Activated T-helper 2 cell treated with anti-CD3 and anti-CD28 coated beads, Interferon-gamma antibody, Interleukin-2, Interleukin-4, amounts not matched to agents 10 μg/mL and 5 μg/mL and 100 μg/mL, durations not matched to agents 14 hours and 24 hours and 36 hours (primary cell): ENCODE measurements at regions of chr6 and their contacts with region 1.

Region 1: DNA sequence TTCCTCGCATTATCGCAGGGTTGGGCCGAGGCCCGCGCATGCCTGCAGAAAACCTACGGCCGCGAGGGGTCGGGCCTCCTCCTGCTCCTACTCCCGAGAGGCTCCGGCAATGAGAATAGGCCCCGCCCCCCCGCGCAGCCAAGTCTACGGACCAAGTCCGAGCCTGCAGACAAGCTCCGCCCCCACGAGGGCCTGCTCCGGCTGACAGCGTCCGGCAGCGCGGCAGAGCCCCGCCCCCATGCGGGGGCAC is 3.1 kb upstream of the GPSM3 start:
- DNase-seq: peak; percentile 100
- H3K4me3 Mint-ChIP-seq: peak overlapping the region; percentile 98
- H3K27ac Mint-ChIP-seq: peak overlapping the region; percentile 99
- H3K4me1 Mint-ChIP-seq: peaks cover 33% of the 10 kb centered on the region
- H3K27me3 Mint-ChIP-seq: no peaks in the 10 kb centered on the region

Region 2: DNA sequence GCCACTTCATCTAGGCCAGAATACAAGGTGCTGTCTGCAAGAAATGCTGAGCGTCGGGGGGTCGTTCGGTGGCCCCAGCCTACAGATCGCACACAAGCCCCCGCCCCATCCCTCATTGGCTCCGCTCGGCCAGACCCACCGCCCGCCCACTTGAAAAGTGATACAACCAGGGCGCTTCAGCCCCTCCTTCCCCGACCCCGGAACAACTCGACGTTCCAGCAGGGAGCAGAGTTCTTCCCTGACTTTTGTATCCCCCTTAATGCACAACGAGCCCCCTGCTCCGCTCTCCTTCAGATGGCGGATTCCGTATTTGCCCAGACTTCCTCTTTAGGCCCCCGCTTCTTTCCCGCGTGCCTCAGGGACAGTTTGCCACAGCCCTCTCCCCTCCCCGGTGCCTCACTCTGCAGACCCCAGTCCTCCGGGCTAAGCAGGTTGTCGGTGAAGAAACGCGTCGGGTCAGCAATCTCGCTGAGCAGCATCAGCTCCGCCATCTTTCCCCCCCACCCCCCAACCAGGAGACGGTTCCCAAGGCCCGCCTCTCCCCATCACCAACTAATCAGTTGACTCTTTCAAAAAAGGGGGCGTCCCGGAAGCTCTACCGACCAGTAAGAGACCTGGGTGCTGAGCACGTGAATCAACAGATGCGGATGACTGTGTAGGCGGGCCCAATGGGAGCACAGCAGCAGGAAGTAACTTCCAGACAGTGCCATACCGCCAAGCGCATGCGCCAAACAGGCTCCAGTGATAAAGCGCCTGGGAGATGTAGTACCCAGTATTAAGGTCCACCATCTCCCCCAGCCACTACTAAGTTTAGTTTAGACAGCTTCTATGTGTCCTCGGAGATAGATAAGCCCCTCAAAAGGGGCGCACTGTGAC is 67.6 kb before region 1 on chr6 and contains the start of gene ATF6B:
- intact Hi-C with region 1: loop called (anchors 1 kb)
- DNase-seq: peak; percentile 98
- H3K4me3 Mint-ChIP-seq: peak within 1 kb of the TSS; percentile 99
- H3K27ac Mint-ChIP-seq: peak within 1 kb of the TSS; percentile 97
- H3K4me1 Mint-ChIP-seq: peaks cover 36% of the 10 kb centered on the region
- H3K27me3 Mint-ChIP-seq: no peaks in the 10 kb centered on the region
- total RNA-seq, gene ATF6B: 86.9 and 91.2 TPM in 2 replicates

Region 3: DNA sequence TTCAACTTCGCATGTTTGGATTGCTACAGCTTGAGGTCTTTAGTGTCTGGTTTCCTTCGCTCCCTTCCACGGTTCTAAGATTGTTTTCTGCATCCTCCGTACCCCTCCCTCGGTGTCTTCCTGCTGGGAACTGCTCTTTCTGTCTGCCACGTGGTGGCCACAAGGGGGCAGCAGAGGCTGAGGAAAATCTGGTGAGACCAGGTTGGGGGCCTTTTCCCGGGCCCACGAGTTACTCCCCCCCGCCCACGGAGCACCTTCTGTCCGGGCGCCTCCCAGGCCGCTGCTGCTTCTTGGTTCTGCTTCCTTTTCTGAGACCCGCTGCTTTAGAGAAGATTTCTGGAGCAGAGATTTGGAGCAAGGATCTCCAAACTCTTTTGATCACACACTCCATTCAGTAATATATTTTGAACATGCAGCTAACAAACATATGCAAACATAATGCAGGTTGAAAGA is 49.4 kb after region 1 on chr6:
- intact Hi-C with region 1: no loop called
- DNase-seq: peak; percentile 51
- H3K4me3 Mint-ChIP-seq: peak overlapping the region; percentile 23
- H3K27ac Mint-ChIP-seq: no peak overlapping the region
- H3K4me1 Mint-ChIP-seq: peaks cover 18% of the 10 kb centered on the region
- H3K27me3 Mint-ChIP-seq: peaks cover 24% of the 10 kb centered on the region

Region 4: DNA sequence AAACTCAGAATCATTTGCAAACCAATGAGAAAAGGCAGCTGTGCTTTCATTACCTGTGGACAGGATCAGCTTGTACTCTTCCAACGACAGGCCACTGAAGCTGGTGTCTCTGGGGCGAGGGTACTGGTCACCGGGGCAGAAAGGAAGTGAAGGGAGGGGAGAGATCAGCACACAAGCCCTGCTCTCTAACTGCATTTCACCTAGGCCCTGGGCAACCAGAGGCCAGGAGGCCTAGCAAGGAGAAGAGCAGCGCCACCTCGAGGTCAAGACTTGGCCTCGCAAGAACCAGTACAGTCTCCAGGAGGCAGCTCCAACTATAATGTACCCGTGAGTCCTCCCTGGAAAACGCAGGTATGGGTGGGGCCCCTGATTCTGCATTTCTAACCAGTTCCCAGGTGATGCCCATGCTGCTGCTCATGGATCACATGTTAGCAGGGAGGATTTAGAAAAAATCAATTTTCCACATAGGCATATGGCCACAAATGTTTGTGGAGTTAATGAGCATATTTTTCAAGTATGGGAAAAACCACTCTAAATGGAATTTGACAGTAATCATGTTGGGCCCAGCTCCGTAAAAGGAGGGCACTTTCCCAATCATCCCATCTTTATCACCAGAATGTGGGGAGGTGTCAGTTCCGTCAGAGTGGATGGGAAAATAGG is 1504.9 kb after region 1 on chr6:
- intact Hi-C with region 1: loop called (anchors 5 kb)
- DNase-seq: peak; percentile 66
- H3K4me3 Mint-ChIP-seq: peak overlapping the region; percentile 15
- H3K27ac Mint-ChIP-seq: peak overlapping the region; percentile 86
- H3K4me1 Mint-ChIP-seq: peaks cover 37% of the 10 kb centered on the region
- H3K27me3 Mint-ChIP-seq: no peaks in the 10 kb centered on the region